A673 (cell line): ENCODE measurements at regions of chr17 and their contacts with region 1.

Region 1: GRCh38 chr17:40909351-40909750 is 24.3 kb upstream of the KRT20 start:
- DNase-seq: peak; percentile 93
- H3K4me3 ChIP-seq: no peak overlapping the region
- H3K27ac ChIP-seq: peak overlapping the region; percentile 87
- H3K4me1 ChIP-seq: peaks cover 32% of the 10 kb centered on the region
- H3K27me3 ChIP-seq: no peaks in the 10 kb centered on the region
- CTCF ChIP-seq: peak; percentile 64

Region 2: GRCh38 chr17:40803617-40804082 is 105.7 kb before region 1 on chr17:
- CTCF ChIA-PET with region 1: no interaction called
- POLR2A ChIA-PET with region 1: no interaction called
- intact Hi-C with region 1: loop called (anchors 5 kb)
- DNase-seq: peak; percentile 80
- H3K4me3 ChIP-seq: no peak overlapping the region
- H3K27ac ChIP-seq: no peak overlapping the region
- H3K4me1 ChIP-seq: no peaks in the 10 kb centered on the region
- H3K27me3 ChIP-seq: no peaks in the 10 kb centered on the region
- CTCF ChIP-seq: peak; percentile 77

Region 3: DNA sequence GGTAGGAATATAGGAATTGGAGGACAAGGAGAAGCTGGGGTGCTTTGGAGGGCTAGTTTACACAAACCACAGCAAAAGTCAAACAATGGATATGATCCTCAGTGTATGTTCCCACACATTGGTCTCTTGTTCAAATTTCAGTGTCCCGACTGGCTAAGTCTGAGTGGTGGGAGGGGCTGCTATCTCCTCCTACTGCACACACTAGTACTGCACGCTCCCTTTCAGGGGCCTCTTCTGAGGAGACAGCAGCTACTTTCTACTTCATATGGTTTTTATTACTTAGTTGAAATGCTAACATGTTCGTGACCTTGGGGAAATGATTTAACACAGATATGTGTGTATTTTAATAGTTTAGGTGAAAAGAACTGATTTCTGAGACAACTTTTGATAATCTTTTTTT is 68.1 kb before region 1 on chr17:
- CTCF ChIA-PET with region 1: no interaction called
- POLR2A ChIA-PET with region 1: no interaction called
- intact Hi-C with region 1: no loop called
- DNase-seq: no peak
- H3K4me3 ChIP-seq: no peak overlapping the region
- H3K27ac ChIP-seq: no peak overlapping the region
- H3K4me1 ChIP-seq: no peaks in the 10 kb centered on the region
- H3K27me3 ChIP-seq: no peaks in the 10 kb centered on the region
- CTCF ChIP-seq: no peak

Region 4: DNA sequence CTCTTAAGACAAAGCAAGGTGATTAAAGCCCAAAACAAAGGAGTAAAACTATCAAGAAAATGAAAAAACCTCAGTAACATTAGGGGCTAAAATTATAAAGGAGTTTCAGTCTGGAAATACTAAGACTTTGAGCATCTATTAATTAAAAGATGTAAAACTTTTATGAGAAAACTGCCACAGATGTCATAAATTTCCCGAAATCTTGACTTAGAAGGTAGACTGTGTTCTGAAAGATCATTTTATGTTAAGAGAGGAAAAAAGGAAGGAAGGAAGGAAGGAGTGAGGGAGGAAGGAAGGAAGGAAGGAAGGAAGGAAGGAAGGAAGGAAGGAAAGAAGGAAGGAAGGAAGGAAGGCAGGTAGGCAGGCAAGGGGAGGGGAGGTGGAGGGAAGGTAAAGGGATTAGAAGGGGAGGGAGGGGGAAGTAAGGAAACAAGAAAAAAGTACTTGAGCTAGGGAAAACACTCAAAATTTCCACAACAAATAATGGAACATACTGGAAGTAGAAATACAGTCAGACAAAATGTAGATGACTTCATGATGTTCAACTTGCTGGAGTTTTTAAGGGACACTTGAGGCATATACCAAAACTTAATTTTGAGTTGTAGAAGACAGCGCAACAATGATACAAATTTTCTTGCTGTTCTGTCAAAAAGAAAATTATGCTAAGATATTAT is 238.3 kb after region 1 on chr17:
- CTCF ChIA-PET with region 1: interaction called, 9 read pairs
- POLR2A ChIA-PET with region 1: interaction called, 5 read pairs
- intact Hi-C with region 1: loop called (anchors 1 kb)
- DNase-seq: peak; percentile 72
- H3K4me3 ChIP-seq: no peak overlapping the region
- H3K27ac ChIP-seq: peak overlapping the region; percentile 96
- H3K4me1 ChIP-seq: peaks cover 31% of the 10 kb centered on the region
- H3K27me3 ChIP-seq: no peaks in the 10 kb centered on the region
- CTCF ChIP-seq: no peak

Region 5: GRCh38 chr17:41496820-41497408 is 587.6 kb after region 1 on chr17:
- CTCF ChIA-PET with region 1: interaction called, 3 read pairs
- POLR2A ChIA-PET with region 1: no interaction called
- intact Hi-C with region 1: loop called (anchors 2 kb)
- DNase-seq: peak; percentile 85
- H3K4me3 ChIP-seq: no peak overlapping the region
- H3K27ac ChIP-seq: no peak overlapping the region
- H3K4me1 ChIP-seq: peaks cover 4% of the 10 kb centered on the region
- H3K27me3 ChIP-seq: no peaks in the 10 kb centered on the region
- CTCF ChIP-seq: peak; percentile 68

Region 6: GRCh38 chr17:42459801-42460281 is 1550.5 kb after region 1 on chr17:
- CTCF ChIA-PET with region 1: no interaction called
- POLR2A ChIA-PET with region 1: interaction called, 10 read pairs
- intact Hi-C with region 1: no loop called
- DNase-seq: no peak
- H3K4me3 ChIP-seq: peak overlapping the region; percentile 59
- H3K27ac ChIP-seq: peak overlapping the region; percentile 30
- H3K4me1 ChIP-seq: peaks cover 17% of the 10 kb centered on the region
- H3K27me3 ChIP-seq: no peaks in the 10 kb centered on the region
- CTCF ChIP-seq: no peak